Activated CD8-positive, alpha-beta T cell treated with anti-CD3 and anti-CD28 coated beads, Interleukin-2, amount 10 ng/mL, durations not matched to agents 7 days and 5 days (primary cell): ENCODE measurements at regions of chr2 and their contacts with region 1.

Region 1: GRCh38 chr2:73985308-73986084 is 786 bp downstream of the TET3 start:
- DNase-seq: peak; percentile 62
- ATAC-seq: peak; percentile 35
- H3K4me3 Mint-ChIP-seq: peak overlapping the region; percentile 79
- H3K27ac Mint-ChIP-seq: peak overlapping the region; percentile 90
- H3K4me1 Mint-ChIP-seq: peaks cover 77% of the 10 kb centered on the region
- H3K27me3 Mint-ChIP-seq: peaks cover 6% of the 10 kb centered on the region

Region 2: GRCh38 chr2:73907840-73908452 is 77.5 kb before region 1 on chr2:
- CTCF ChIA-PET with region 1: interaction called, 35 read pairs
- POLR2A ChIA-PET with region 1: no interaction called
- DNase-seq: peak; percentile 73
- ATAC-seq: peak; percentile 94
- H3K4me3 Mint-ChIP-seq: no peak overlapping the region
- H3K27ac Mint-ChIP-seq: peak overlapping the region; percentile 45
- H3K4me1 Mint-ChIP-seq: peaks cover 8% of the 10 kb centered on the region
- H3K27me3 Mint-ChIP-seq: no peaks in the 10 kb centered on the region

Region 3: GRCh38 chr2:73970850-73971471 is 14.5 kb before region 1 on chr2:
- CTCF ChIA-PET with region 1: interaction called, 10 read pairs
- POLR2A ChIA-PET with region 1: interaction called, 27 read pairs
- DNase-seq: peak; percentile 76
- ATAC-seq: peak; percentile 87
- H3K4me3 Mint-ChIP-seq: peak overlapping the region; percentile 53
- H3K27ac Mint-ChIP-seq: peak overlapping the region; percentile 87
- H3K4me1 Mint-ChIP-seq: peaks cover 58% of the 10 kb centered on the region
- H3K27me3 Mint-ChIP-seq: no peaks in the 10 kb centered on the region

Region 4: GRCh38 chr2:73995810-73996209 is 10.3 kb after region 1 on chr2:
- CTCF ChIA-PET with region 1: interaction called, 18 read pairs
- POLR2A ChIA-PET with region 1: interaction called, 14 read pairs
- DNase-seq: no peak
- ATAC-seq: no peak
- H3K4me3 Mint-ChIP-seq: no peak overlapping the region
- H3K27ac Mint-ChIP-seq: no peak overlapping the region
- H3K4me1 Mint-ChIP-seq: peaks cover 47% of the 10 kb centered on the region
- H3K27me3 Mint-ChIP-seq: no peaks in the 10 kb centered on the region

Region 5: GRCh38 chr2:74002487-74003391 is 17.2 kb after region 1 on chr2:
- CTCF ChIA-PET with region 1: interaction called, 18 read pairs
- POLR2A ChIA-PET with region 1: interaction called, 14 read pairs
- DNase-seq: peak; percentile 78
- ATAC-seq: peak; percentile 98
- H3K4me3 Mint-ChIP-seq: peak overlapping the region; percentile 73
- H3K27ac Mint-ChIP-seq: peak overlapping the region; percentile 26
- H3K4me1 Mint-ChIP-seq: peaks cover 38% of the 10 kb centered on the region
- H3K27me3 Mint-ChIP-seq: no peaks in the 10 kb centered on the region